Dorsolateral prefrontal cortex (tissue), 120 donors: ENCODE measurements at regions of chr18 and their contacts with region 1.

Region 1: DNA sequence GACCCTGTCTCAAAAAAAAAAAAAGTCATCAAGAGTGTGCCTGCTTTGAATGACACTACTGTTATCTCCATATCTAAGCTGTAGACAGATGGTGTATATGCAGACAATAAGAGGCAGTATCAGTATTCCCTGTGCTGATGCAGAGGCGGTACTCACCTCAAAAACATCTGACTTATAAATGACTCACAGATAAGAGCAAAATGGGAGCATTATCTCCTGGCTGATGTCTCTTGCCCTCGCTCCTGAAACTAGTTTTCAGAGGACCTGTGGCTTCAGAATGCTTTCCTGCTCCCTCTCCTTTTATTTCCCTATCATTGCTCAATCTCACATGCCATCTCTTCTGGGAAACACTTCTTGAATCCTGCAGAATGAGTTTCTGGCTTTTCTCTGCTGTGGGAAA is 289.6 kb downstream of the PTPRM start:
- DNase-seq: no peak
- H3K4me3 ChIP-seq: no peak overlapping the region
- H3K27ac ChIP-seq: no peak overlapping the region
- H3K27me3 ChIP-seq: no peaks in the 10 kb centered on the region
- CTCF ChIP-seq: no peak

Region 2: DNA sequence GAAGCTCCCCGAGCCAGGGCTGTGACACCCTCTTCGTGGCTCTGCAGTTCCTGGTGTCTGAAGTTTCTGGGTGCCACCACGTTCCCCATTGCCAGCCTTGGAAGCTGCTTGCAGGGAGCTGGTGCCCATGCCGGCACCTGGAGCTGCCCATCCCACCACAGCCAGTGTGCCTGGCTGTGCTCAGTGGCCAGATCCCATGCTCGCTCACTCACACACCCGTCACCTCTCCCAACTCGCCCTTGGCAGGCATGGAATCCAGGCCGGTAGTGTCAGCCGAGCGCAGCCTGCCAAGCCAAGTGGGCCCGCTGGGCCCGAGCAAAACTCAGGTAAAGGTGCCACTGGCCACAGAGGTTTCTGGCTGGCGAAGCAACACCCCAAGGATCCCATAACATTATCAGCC is 80.5 kb after region 1 on chr18:
- intact Hi-C with region 1: loop called in 1 of 2 experiments (anchors 10 kb)
- DNase-seq: no peak
- H3K4me3 ChIP-seq: no peak overlapping the region
- H3K27ac ChIP-seq: no peak overlapping the region
- H3K27me3 ChIP-seq: peaks cover 0 to 2% (median 0%) of the 10 kb centered on the region in 45 donors
- CTCF ChIP-seq: no peak